Natural killer cell (primary cell): ENCODE measurements at regions of chr19 and their contacts with region 1.

Region 1: GRCh38 chr19:41945135-41945766 is 13.9 kb downstream of the RABAC1 start:
- DNase-seq: peak; percentile 88 to 95
- ATAC-seq: peak; percentile 79 to 92 (median 90)
- H3K4me3 ChIP-seq: no peak overlapping the region
- H3K4me3 Mint-ChIP-seq: peak overlapping the region; percentile 72
- H3K27ac ChIP-seq: peak overlapping the region; percentile 81
- H3K27ac Mint-ChIP-seq: peak overlapping the region; percentile 93 to 97
- H3K4me1 ChIP-seq: peaks cover 55% of the 10 kb centered on the region
- H3K4me1 Mint-ChIP-seq: peaks cover 44 to 64% of the 10 kb centered on the region in 2 donors
- H3K27me3 ChIP-seq: peaks cover 7% of the 10 kb centered on the region
- H3K27me3 Mint-ChIP-seq: peaks cover 14 to 17% of the 10 kb centered on the region in 2 donors
- CTCF ChIP-seq: no peak

Region 2: GRCh38 chr19:41887711-41888382 is 57.4 kb before region 1 on chr19:
- intact Hi-C with region 1: loop called (anchors 1 kb)
- DNase-seq: peak; percentile 75 to 90
- ATAC-seq: peak; percentile 25 to 34 (median 27)
- H3K4me3 ChIP-seq: peak overlapping the region; percentile 56
- H3K4me3 Mint-ChIP-seq: peak overlapping the region; percentile 84
- H3K27ac ChIP-seq: peak overlapping the region; percentile 92
- H3K27ac Mint-ChIP-seq: peak overlapping the region; percentile 84 to 89
- H3K4me1 ChIP-seq: peaks cover 85% of the 10 kb centered on the region
- H3K4me1 Mint-ChIP-seq: peaks cover 61 to 83% of the 10 kb centered on the region in 2 donors
- H3K27me3 ChIP-seq: no peaks in the 10 kb centered on the region
- H3K27me3 Mint-ChIP-seq: no peaks in the 10 kb centered on the region
- CTCF ChIP-seq: no peak

Region 3: GRCh38 chr19:41934849-41935374 is 10.3 kb before region 1 on chr19:
- intact Hi-C with region 1: loop called (anchors 1 kb)
- DNase-seq: peak; percentile 77 to 90
- ATAC-seq: peak; percentile 78 to 84 (median 80)
- H3K4me3 ChIP-seq: no peak overlapping the region
- H3K4me3 Mint-ChIP-seq: no peak overlapping the region
- H3K27ac ChIP-seq: no peak overlapping the region
- H3K27ac Mint-ChIP-seq: peak overlapping the region; percentile 69 to 90
- H3K4me1 ChIP-seq: peaks cover 51% of the 10 kb centered on the region
- H3K4me1 Mint-ChIP-seq: peaks cover 35 to 60% of the 10 kb centered on the region in 2 donors
- H3K27me3 ChIP-seq: peaks cover 15% of the 10 kb centered on the region
- H3K27me3 Mint-ChIP-seq: peaks cover 12 to 24% of the 10 kb centered on the region in 2 donors
- CTCF ChIP-seq: peak; percentile 88